Mammary epithelial cell (primary cell): ENCODE measurements at regions of chr13 and their contacts with region 1.

Region 1: DNA sequence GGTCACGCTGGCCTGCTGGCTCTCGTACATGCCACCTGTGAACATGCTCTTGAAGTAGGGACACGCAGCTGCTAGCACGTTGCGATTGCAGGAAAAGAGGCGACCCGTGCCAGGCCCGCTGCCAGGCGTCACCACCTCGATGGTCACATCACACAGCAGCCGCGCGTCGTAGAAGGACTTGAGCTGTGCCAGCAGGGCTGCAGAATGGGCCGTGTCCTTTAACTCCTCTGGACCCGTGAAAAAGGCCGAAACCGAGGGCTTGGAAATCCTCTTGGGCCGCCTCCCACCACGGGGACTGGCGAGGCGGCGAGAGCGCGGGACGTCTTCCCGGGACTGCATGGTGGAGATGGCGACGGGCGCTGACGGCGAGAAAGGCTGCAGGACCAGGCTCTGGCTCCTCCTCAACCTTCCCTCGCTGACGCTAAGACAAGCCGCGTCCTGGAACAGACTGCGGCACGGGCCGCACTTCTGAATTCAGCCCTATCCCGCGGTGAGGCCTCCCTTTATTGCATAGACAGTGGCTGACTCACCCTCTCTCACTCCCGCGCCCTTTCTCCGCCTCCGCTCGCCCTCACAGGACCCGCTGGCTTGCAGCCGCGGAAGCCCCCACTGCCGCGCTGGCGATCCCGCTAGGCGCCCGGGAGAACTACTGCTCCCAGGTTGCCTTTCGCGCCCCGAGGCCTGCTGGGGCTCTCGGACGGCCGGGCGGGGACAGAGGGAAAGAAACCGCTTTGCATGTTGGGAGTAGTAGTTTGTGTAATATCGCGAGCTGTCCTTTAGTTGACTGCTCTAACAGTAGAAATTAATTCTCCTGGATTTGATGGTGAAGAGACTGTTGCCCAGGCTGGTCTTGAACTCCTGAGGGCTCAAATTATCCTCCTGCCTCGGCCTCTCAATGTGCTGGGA is at the start of gene KBTBD7:
- DNase-seq: peak; percentile 98
- H3K4me3 ChIP-seq: peak within 1 kb of the TSS; percentile 42 to 65 (median 61)
- H3K27ac ChIP-seq: peak within 1 kb of the TSS; percentile 67
- H3K4me1 ChIP-seq: peaks cover 8% of the 10 kb centered on the region
- H3K27me3 ChIP-seq: no peaks in the 10 kb centered on the region
- CTCF ChIP-seq: no peak
- total RNA-seq, gene KBTBD7: 4.3 to 7.2 TPM

Region 2: GRCh38 chr13:41054212-41054877 is 139.8 kb before region 1 on chr13:
- CTCF ChIA-PET with region 1: interaction called, 6 read pairs
- dilution Hi-C with region 1: no loop called
- in situ Hi-C with region 1: no loop called
- intact Hi-C with region 1: loop called (anchors 1 kb)
- DNase-seq: peak; percentile 48
- H3K4me3 ChIP-seq: no peak overlapping the region
- H3K27ac ChIP-seq: no peak overlapping the region
- H3K4me1 ChIP-seq: peaks cover 15% of the 10 kb centered on the region
- H3K27me3 ChIP-seq: no peaks in the 10 kb centered on the region
- CTCF ChIP-seq: peak; percentile 54 to 61

Region 3: DNA sequence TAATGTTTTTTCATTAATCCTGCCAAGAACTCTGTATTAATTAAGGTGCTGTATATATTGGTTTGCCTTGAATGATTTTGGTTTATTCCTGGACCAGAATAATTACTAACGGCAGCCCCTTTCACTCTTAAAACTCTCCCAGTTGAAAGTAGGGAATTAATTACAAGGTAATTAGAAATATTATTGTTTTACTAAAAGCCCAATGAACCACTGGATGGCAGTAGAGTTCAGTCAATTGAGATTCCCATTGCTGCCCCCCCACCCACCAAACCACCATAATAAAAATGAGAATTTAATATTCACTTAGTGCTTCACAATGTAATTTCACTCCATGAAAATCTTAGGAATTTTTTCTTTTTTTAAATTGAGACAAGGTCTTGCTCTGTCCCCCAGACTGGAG is 119.1 kb before region 1 on chr13:
- CTCF ChIA-PET with region 1: interaction called, 12 read pairs
- dilution Hi-C with region 1: no loop called
- in situ Hi-C with region 1: no loop called
- intact Hi-C with region 1: loop called (anchors 1 kb)
- DNase-seq: no peak
- H3K4me3 ChIP-seq: no peak overlapping the region
- H3K27ac ChIP-seq: no peak overlapping the region
- H3K4me1 ChIP-seq: no peaks in the 10 kb centered on the region
- H3K27me3 ChIP-seq: no peaks in the 10 kb centered on the region
- CTCF ChIP-seq: peak; percentile 38 to 52

Region 4: DNA sequence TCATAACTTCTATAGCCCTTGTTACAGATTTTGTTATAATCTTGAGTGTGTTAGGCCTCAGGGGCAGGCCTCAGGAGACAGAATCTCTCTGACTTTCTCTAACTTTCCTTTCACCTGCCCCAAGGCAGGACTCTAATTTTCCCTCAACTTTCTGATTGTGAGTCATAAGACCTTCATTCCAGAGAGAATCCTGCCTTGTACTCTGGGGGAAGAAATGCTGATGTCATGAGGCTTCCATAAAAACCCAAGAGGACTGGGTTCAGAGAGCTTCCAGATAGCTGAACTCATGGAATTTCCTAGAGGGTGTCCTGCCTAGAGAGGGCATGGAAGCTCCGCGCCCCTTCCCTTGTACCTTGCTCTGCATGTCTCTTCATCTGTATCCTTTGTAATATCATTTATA is 56.2 kb before region 1 on chr13:
- CTCF ChIA-PET with region 1: no interaction called
- dilution Hi-C with region 1: no loop called
- in situ Hi-C with region 1: loop called (anchors 5 to 10 kb)
- intact Hi-C with region 1: loop called (anchors 1 kb)
- DNase-seq: peak; percentile 96
- H3K4me3 ChIP-seq: no peak overlapping the region
- H3K27ac ChIP-seq: peak overlapping the region; percentile 99
- H3K4me1 ChIP-seq: peaks cover 38% of the 10 kb centered on the region
- H3K27me3 ChIP-seq: no peaks in the 10 kb centered on the region
- CTCF ChIP-seq: no peak